MCF 10A (cell line): ENCODE measurements at regions of chr10 and their contacts with region 1.

Region 1: GRCh38 chr10:104308439-104308903 is 29.8 kb downstream of the ITPRIP start:
- DNase-seq: no peak
- H3K4me3 Mint-ChIP-seq: no peak overlapping the region
- H3K27ac Mint-ChIP-seq: peak overlapping the region; percentile 37
- H3K4me1 Mint-ChIP-seq: peaks cover 30% of the 10 kb centered on the region
- H3K27me3 Mint-ChIP-seq: no peaks in the 10 kb centered on the region
- CTCF ChIP-seq: no peak

Region 2: DNA sequence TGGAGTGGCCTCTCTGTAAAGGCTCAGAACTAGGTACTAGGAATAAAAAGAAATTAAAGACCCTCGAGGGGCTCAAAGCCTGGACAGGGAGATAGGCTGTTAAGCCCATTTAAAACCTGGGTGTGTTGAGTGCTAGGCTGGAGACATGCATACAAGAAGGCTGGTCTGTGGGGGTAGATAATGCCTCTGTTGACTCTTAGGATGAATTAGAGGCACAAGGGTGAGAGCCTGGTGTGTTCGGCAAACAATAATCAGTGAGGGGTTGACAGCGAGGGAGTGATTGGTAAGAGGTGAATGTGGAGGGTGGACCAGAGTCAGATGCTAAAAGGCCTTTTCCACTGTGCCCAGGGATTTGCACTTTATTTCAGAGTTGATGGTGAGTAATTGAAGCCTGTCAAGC is 26.8 kb before region 1 on chr10:
- CTCF ChIA-PET with region 1: interaction called, 46 read pairs
- POLR2A ChIA-PET with region 1: no interaction called
- intact Hi-C with region 1: no loop called
- DNase-seq: no peak
- H3K4me3 Mint-ChIP-seq: no peak overlapping the region
- H3K27ac Mint-ChIP-seq: no peak overlapping the region
- H3K4me1 Mint-ChIP-seq: no peaks in the 10 kb centered on the region
- H3K27me3 Mint-ChIP-seq: no peaks in the 10 kb centered on the region
- CTCF ChIP-seq: no peak

Region 3: GRCh38 chr10:104322416-104322782 is 13.9 kb after region 1 on chr10:
- CTCF ChIA-PET with region 1: interaction called, 105 read pairs
- POLR2A ChIA-PET with region 1: interaction called, 95 read pairs
- intact Hi-C with region 1: no loop called
- DNase-seq: peak; percentile 91
- H3K4me3 Mint-ChIP-seq: no peak overlapping the region
- H3K27ac Mint-ChIP-seq: peak overlapping the region; percentile 95
- H3K4me1 Mint-ChIP-seq: peaks cover 74% of the 10 kb centered on the region
- H3K27me3 Mint-ChIP-seq: no peaks in the 10 kb centered on the region
- CTCF ChIP-seq: no peak

Region 4: DNA sequence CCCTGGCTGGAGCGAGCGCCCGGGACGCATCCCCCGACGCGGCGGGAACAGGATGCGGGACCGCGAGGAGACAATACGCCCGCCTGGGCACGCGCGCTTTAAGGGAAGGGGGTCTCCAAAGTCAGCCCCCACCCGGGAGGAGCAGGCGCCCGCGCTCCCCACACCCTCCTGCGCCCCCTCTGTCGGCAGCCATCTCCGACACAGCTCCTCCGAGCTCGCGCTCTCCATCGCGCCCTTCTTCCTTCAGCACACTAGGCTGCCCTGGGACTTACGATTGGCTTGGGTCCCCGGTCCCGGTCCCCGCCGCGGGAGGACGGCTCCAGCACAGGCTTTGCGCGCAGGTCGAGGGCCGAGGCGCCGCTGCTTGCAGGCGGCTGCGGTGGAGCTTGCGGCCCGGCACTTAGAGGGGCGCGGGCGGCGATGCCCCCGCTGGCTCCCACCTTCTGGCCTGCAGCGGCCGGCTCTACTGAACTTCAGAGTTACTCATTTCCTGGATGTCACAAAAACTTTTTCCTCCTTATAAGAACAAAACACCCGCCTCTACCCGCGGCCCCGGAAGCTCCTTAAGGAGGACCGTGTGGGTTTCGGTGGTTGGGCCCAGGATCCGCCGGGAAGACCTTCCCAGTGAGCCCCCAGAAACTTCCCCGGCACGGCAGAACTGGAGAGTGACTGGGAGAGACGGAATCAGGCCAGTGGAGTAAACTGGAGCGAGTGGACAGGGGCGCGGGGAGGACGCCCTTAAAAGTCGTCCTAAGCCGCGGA is 29.7 kb after region 1 on chr10 and contains the start of gene ITPRIP:
- CTCF ChIA-PET with region 1: interaction called, 33 read pairs
- POLR2A ChIA-PET with region 1: interaction called, 67 read pairs
- intact Hi-C with region 1: no loop called
- DNase-seq: peak; percentile 81
- H3K4me3 Mint-ChIP-seq: peak within 1 kb of the TSS; percentile 80
- H3K27ac Mint-ChIP-seq: peak within 1 kb of the TSS; percentile 97
- H3K4me1 Mint-ChIP-seq: peaks cover 39% of the 10 kb centered on the region
- H3K27me3 Mint-ChIP-seq: no peaks in the 10 kb centered on the region
- CTCF ChIP-seq: no peak
- total RNA-seq, gene ITPRIP: 29.4 and 29.8 TPM in 2 replicates

Region 5: DNA sequence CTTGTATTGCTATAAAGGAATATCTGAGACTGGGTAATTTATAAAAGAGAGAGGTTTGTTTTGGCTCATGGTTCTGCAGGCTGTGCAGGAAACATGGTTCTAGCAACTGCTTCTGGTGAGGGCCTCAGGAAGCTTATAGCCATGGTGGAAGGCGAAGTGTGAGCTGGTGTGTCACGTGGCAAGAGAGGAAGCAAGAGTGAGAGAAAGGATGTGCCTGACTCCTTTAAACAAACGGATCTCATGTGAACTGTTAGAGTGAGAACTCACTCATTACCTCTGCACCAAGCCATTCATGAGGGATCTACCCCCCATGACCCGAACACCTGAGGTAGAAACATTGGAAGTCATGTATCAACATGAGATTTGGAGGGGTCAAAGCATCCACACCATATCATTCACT is 37.5 kb after region 1 on chr10:
- CTCF ChIA-PET with region 1: interaction called, 132 read pairs
- POLR2A ChIA-PET with region 1: interaction called, 14 read pairs
- intact Hi-C with region 1: loop called (anchors 1 kb)
- DNase-seq: no peak
- H3K4me3 Mint-ChIP-seq: no peak overlapping the region
- H3K27ac Mint-ChIP-seq: no peak overlapping the region
- H3K4me1 Mint-ChIP-seq: no peaks in the 10 kb centered on the region
- H3K27me3 Mint-ChIP-seq: no peaks in the 10 kb centered on the region
- CTCF ChIP-seq: no peak

Region 6: DNA sequence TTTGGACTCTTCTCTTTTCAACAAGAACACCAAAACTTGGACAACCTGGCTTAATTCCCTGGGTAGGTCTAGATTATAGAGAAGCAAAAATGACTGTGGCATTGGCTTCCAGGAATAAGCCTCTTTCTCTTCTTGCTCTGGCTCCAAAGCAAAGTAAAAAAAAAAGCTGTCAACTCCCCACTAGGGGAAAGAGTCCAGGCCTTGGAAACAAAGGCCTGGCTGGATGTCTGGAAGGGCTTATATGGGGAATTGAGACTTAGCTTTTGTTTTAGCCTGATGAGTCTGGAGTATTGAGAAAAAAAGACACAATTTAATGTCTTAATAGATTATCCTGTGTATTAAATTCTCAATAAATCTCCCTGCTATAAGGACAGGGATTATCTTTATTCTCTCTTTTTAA is 633.2 kb after region 1 on chr10:
- CTCF ChIA-PET with region 1: no interaction called
- POLR2A ChIA-PET with region 1: no interaction called
- intact Hi-C with region 1: no loop called
- DNase-seq: no peak
- H3K4me3 Mint-ChIP-seq: no peak overlapping the region
- H3K27ac Mint-ChIP-seq: no peak overlapping the region
- H3K4me1 Mint-ChIP-seq: peaks cover 12% of the 10 kb centered on the region
- H3K27me3 Mint-ChIP-seq: no peaks in the 10 kb centered on the region
- CTCF ChIP-seq: no peak